CD8-positive, alpha-beta T cell (primary cell): ENCODE measurements at regions of chr2 and their contacts with region 1.

Region 1: GRCh38 chr2:35365859-35366258 is 989.7 kb upstream of the CRIM1 start:
- DNase-seq: no peak
- ATAC-seq: no peak
- H3K4me3 ChIP-seq: no peak overlapping the region
- H3K4me3 Mint-ChIP-seq: no peak overlapping the region
- H3K27ac ChIP-seq: no peak overlapping the region
- H3K27ac Mint-ChIP-seq: no peak overlapping the region
- H3K4me1 ChIP-seq: no peaks in the 10 kb centered on the region
- H3K4me1 Mint-ChIP-seq: no peaks in the 10 kb centered on the region
- H3K27me3 ChIP-seq: no peaks in the 10 kb centered on the region
- H3K27me3 Mint-ChIP-seq: no peaks in the 10 kb centered on the region
- CTCF ChIP-seq: no peak

Region 2: GRCh38 chr2:35391736-35392442 is 26.0 kb after region 1 on chr2:
- CTCF ChIA-PET with region 1: no interaction called
- POLR2A ChIA-PET with region 1: no interaction called
- intact Hi-C with region 1: loop called in 1 of 2 experiments (anchors 2 kb)
- DNase-seq: no peak
- ATAC-seq: no peak
- H3K4me3 ChIP-seq: no peak overlapping the region
- H3K4me3 Mint-ChIP-seq: no peak overlapping the region
- H3K27ac ChIP-seq: no peak overlapping the region
- H3K27ac Mint-ChIP-seq: no peak overlapping the region
- H3K4me1 ChIP-seq: no peaks in the 10 kb centered on the region
- H3K4me1 Mint-ChIP-seq: no peaks in the 10 kb centered on the region
- H3K27me3 ChIP-seq: no peaks in the 10 kb centered on the region
- H3K27me3 Mint-ChIP-seq: no peaks in the 10 kb centered on the region
- CTCF ChIP-seq: no peak

Region 3: DNA sequence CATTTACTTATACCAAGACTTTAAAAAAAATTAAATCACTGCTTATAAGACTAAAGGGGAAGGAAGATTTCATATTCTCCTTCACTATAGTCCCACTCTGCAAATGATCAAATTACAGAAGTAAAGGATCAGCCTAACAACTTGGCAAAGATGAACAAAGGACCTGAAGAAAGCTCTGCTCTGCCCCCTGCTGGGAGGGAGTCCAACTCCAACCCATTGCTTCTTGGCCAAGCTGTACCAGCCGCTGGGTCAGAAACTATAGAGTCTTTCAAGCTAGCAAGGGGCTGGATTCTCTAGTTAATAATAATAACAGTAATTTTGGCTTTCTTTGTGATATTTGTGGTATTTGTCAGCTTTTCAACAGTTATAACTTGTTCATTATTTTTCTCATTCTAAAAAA is 62.7 kb after region 1 on chr2:
- CTCF ChIA-PET with region 1: no interaction called
- POLR2A ChIA-PET with region 1: no interaction called
- intact Hi-C with region 1: no loop called
- DNase-seq: no peak
- ATAC-seq: no peak
- H3K4me3 ChIP-seq: no peak overlapping the region
- H3K4me3 Mint-ChIP-seq: no peak overlapping the region
- H3K27ac ChIP-seq: no peak overlapping the region
- H3K27ac Mint-ChIP-seq: no peak overlapping the region
- H3K4me1 ChIP-seq: no peaks in the 10 kb centered on the region
- H3K4me1 Mint-ChIP-seq: no peaks in the 10 kb centered on the region
- H3K27me3 ChIP-seq: no peaks in the 10 kb centered on the region
- H3K27me3 Mint-ChIP-seq: no peaks in the 10 kb centered on the region
- CTCF ChIP-seq: no peak

Region 4: DNA sequence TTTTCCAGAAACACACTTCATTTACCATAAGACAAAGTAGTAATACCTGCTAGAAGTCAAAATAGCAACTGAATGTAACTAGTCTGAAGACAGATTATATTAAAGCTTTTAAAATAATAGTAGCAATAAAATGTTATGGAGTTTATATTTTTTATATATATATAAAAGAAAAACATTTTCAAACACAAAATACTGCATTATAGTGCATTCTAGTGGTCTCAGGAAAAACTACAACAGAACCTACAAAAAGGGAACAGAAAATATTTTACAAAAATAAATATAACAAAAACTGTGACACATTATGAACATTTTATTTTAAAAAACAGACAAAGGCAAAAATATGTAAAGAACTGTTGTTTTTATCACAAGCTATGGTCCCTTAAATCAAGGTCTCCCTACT is 1552.4 kb after region 1 on chr2:
- CTCF ChIA-PET with region 1: no interaction called
- POLR2A ChIA-PET with region 1: no interaction called
- intact Hi-C with region 1: no loop called
- DNase-seq: no peak
- ATAC-seq: no peak
- H3K4me3 ChIP-seq: no peak overlapping the region
- H3K4me3 Mint-ChIP-seq: no peak overlapping the region
- H3K27ac ChIP-seq: no peak overlapping the region
- H3K27ac Mint-ChIP-seq: no peak overlapping the region
- H3K4me1 ChIP-seq: no peaks in the 10 kb centered on the region
- H3K4me1 Mint-ChIP-seq: peaks cover 19% of the 10 kb centered on the region
- H3K27me3 ChIP-seq: no peaks in the 10 kb centered on the region
- H3K27me3 Mint-ChIP-seq: no peaks in the 10 kb centered on the region
- CTCF ChIP-seq: peak; percentile 37